ENCODE measurements at regions of chr2 and their contacts with region 1.

Region 1: DNA sequence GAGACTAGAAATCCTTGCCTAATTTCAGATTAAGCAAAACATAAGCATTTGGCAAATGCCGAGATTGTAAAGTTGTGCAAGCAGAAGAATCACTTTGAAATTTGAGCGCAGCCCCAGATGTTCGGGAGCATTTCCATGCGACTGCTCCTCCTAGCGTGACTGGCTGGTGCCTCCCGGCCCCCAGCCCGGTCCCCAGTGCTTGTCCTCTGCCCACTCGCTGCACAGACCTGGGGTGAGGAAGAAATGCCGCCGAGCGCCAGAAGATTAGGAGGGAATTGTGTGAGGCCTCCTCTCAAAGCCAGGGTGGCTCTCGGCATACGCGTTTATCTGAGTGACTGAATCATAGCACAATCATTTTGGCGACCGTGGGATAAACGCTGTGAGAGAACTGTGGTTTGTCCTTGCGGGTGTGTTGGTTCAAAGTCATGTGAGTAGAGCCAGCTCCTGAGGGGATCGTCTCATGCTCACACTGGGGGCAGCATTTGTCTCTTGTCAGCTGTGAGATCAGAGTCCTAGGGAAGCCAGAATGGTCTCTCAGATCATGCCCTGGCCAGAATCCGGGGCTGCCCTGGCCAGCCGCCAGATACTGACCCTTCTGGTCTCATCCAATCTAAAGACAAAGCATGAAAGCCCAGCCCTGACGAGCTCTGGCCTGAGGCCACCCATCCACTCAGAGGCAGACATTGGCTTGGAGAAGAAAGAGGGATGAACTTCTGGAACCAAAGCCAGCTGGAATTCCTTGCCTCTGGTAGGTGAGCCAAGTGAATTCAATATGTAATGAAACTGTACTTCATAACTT is 189.3 kb downstream of the SH3RF3 start:
- DNase-seq: peak; percentile 62 to 85
- ATAC-seq: peak; percentile 53 to 79 (median 64)
- H3K4me3 ChIP-seq: peak overlapping the region in 5 of 10 donors; percentile 2 to 21 (median 17)
- H3K27ac ChIP-seq: peak overlapping the region; percentile 33 to 85 (median 63)
- H3K4me1 ChIP-seq: peaks cover 7 to 68% (median 53%) of the 10 kb centered on the region in 9 donors
- H3K27me3 ChIP-seq: no peaks in the 10 kb centered on the region
- CTCF ChIP-seq: peak in 6 of 9 donors; percentile 4 to 43 (median 25)

Region 2: GRCh38 chr2:109079590-109079989 is 238.8 kb before region 1 on chr2:
- intact Hi-C with region 1: no loop called
- DNase-seq: no peak
- ATAC-seq: no peak
- H3K4me3 ChIP-seq: no peak overlapping the region
- H3K27ac ChIP-seq: no peak overlapping the region
- H3K4me1 ChIP-seq: no peaks in the 10 kb centered on the region
- H3K27me3 ChIP-seq: peaks cover 0 to 7% (median 0%) of the 10 kb centered on the region in 7 donors
- CTCF ChIP-seq: no peak

Region 3: GRCh38 chr2:109242654-109243331 is 75.6 kb before region 1 on chr2:
- intact Hi-C with region 1: loop called in 1 of 10 experiments (anchors 10 kb)
- DNase-seq: no peak
- ATAC-seq: peak; percentile 56 to 82 (median 70)
- H3K4me3 ChIP-seq: no peak overlapping the region
- H3K27ac ChIP-seq: peak overlapping the region; percentile 47 to 89 (median 82)
- H3K4me1 ChIP-seq: peaks cover 27 to 88% (median 66%) of the 10 kb centered on the region in 9 donors
- H3K27me3 ChIP-seq: no peaks in the 10 kb centered on the region
- CTCF ChIP-seq: no peak

Region 4: GRCh38 chr2:109275120-109276012 is 43.0 kb before region 1 on chr2:
- intact Hi-C with region 1: loop called in 2 of 10 experiments (anchors 5 to 10 kb)
- DNase-seq: no peak
- ATAC-seq: peak in 3 of 8 donors; percentile 6 to 18 (median 9)
- H3K4me3 ChIP-seq: no peak overlapping the region
- H3K27ac ChIP-seq: no peak overlapping the region
- H3K4me1 ChIP-seq: peaks cover 2 to 33% (median 22%) of the 10 kb centered on the region in 9 donors
- H3K27me3 ChIP-seq: no peaks in the 10 kb centered on the region
- CTCF ChIP-seq: no peak

Region 5: DNA sequence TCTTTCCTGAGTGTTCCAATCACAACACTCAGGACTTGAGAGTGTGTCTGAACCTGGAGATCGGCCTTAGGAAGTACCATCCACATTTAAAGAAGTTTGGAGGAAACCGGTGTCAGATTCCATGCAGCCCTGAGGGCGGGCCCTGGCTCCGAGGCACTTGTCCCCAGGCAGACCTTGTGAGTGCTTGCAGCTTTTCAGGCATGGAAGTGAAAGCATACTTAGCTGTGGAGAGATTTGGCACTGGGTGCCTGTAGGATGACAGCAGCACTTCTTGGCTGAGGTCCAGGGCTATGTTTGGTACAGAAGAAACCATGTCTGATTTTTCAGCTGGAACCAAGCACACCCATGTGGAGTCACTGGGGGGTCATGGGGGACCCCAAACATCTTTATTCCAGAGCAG is 64.6 kb after region 1 on chr2:
- intact Hi-C with region 1: loop called in 1 of 10 experiments (anchors 5 kb)
- DNase-seq: peak; percentile 48 to 87
- ATAC-seq: peak; percentile 86 to 96 (median 93)
- H3K4me3 ChIP-seq: no peak overlapping the region
- H3K27ac ChIP-seq: peak overlapping the region in 7 of 10 donors; percentile 4 to 56 (median 41)
- H3K4me1 ChIP-seq: peaks cover 17 to 48% (median 30%) of the 10 kb centered on the region in 9 donors
- H3K27me3 ChIP-seq: no peaks in the 10 kb centered on the region
- CTCF ChIP-seq: no peak

Measured in heart right ventricle (tissue), 16 donors.